ENCODE measurements at regions of chr10 and their contacts with region 1.

Region 1: DNA sequence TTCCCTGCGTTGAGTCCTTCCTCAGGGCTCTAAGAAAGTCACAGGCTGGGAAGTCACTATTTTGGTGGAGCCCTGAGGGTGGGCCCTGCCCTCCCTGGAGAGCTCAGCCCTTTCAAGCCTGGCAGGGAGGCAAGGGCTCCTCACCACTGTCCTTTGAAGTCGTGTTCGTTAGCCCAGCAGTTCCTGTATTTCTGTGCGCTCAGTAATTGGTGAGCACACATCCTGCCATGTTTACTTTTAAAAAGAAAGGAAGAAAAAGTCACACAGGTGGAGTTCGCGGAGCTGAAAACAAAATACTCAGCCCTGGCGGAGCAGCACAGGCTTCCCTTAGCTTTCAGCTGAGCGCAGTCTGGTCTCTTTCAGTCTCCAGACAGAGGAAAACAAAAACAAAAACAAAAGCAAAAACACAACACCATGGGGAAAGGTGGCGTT is 37.1 kb downstream of the PRKCQ start:
- DNase-seq: peak; percentile 67
- H3K4me3 Mint-ChIP-seq: peak overlapping the region; percentile 87
- H3K27ac Mint-ChIP-seq: peak overlapping the region; percentile 99
- H3K4me1 Mint-ChIP-seq: peaks cover 74% of the 10 kb centered on the region
- H3K27me3 Mint-ChIP-seq: no peaks in the 10 kb centered on the region

Region 2: DNA sequence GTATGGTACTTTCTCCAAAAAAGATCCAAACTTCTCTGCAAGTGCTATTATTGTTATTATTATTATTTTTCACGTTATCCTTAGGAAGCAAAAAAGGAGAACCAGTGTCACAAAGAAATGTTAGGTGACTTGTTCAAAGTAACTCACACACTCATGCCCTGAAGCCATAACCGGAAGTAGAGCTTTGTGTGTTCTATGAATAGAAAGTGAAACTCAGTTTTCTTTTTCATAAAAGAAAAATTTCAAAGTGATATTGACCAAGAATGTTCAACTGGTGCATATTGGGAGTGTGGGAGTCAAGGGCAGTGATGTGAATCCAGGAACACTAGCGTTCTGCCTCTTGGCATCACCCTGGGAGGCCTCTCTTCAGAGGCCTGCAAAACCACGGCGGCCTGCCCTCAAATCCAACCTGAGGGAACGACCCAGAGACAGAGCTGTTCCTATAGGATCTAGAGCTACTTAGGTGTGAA is 69.1 kb before region 1 on chr10:
- CTCF ChIA-PET with region 1: no interaction called
- intact Hi-C with region 1: loop called (anchors 1 kb)
- DNase-seq: peak; percentile 36
- H3K4me3 Mint-ChIP-seq: peak overlapping the region; percentile 71
- H3K27ac Mint-ChIP-seq: peak overlapping the region; percentile 89
- H3K4me1 Mint-ChIP-seq: peaks cover 53% of the 10 kb centered on the region
- H3K27me3 Mint-ChIP-seq: no peaks in the 10 kb centered on the region

Region 3: DNA sequence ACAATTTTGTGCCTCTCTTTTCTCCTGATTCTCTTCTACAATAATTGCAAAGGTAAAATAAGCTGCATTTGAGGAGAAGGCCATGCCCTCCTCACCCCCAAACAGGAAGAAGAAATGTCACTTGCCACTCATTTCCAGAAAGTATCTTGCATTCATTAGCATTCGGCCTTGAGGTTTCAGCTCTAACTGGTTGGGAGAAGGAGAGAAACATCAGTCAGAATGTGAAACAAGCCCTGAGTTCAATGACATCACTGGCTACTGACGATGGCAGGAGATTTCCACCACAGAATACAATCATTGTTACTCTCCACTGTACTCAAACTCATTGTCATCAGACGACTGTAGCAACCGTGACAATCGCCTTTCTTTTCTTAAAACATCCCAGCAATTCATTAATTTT is 35.7 kb before region 1 on chr10:
- CTCF ChIA-PET with region 1: no interaction called
- intact Hi-C with region 1: loop called (anchors 1 kb)
- DNase-seq: peak; percentile 80
- H3K4me3 Mint-ChIP-seq: peak overlapping the region; percentile 7
- H3K27ac Mint-ChIP-seq: peak overlapping the region; percentile 90
- H3K4me1 Mint-ChIP-seq: peaks cover 73% of the 10 kb centered on the region
- H3K27me3 Mint-ChIP-seq: no peaks in the 10 kb centered on the region

Region 4: DNA sequence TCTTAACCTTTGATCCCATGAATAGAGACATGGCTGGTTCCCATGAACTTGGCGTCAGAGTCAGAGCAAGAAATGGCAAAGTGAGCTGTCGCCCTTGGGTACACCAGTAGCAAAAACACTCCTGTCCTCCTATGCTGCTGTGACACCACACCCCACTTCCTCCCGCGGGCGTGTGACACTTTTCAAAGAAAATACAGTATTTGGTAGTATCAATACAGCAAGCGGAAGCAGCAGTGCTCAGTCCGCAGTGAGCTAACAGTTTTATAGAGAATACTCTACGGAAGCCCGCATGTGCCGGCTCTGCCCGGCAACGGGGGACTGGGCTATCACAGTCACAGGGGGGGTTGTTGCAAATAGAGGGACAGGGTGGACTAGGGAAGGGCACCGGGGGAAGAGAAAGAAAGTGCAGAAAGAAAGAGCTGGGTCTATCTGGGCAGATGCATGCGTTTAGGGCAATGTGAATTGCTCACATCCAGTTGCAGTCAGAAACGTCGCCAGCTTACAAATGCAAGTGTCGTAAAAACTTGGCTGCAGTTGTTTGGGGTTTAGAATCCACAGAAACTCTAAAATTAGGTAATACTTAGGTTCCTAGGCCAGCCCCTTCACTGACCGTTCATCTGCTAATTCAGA is 12.7 kb before region 1 on chr10:
- CTCF ChIA-PET with region 1: interaction called, 3 read pairs
- intact Hi-C with region 1: loop called (anchors 1 kb)
- DNase-seq: peak; percentile 92
- H3K4me3 Mint-ChIP-seq: peak overlapping the region; percentile 78
- H3K27ac Mint-ChIP-seq: peak overlapping the region; percentile 90
- H3K4me1 Mint-ChIP-seq: peaks cover 80% of the 10 kb centered on the region
- H3K27me3 Mint-ChIP-seq: no peaks in the 10 kb centered on the region

Region 5: DNA sequence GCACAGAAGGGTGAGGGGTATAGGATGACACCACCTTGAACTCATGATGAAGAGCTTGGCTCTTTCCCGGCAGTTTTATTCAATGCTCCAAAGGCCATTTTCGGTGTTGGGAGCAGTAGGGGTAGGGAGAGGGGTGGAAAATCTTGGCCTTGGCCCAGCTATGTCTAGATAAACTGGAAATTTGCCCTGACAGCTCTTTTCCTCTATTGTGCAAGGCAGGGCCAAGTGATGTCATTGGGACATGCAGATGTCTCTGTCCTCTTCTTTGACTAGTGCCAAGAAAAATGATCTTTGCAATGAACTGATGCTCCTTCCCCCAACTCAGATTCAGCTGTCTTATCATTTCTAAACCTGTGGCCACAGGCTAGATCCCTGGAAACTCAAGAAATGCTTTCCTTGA is 64.8 kb after region 1 on chr10:
- CTCF ChIA-PET with region 1: no interaction called
- intact Hi-C with region 1: loop called (anchors 2 kb)
- DNase-seq: no peak
- H3K4me3 Mint-ChIP-seq: peak overlapping the region; percentile 65
- H3K27ac Mint-ChIP-seq: peak overlapping the region; percentile 94
- H3K4me1 Mint-ChIP-seq: peaks cover 72% of the 10 kb centered on the region
- H3K27me3 Mint-ChIP-seq: no peaks in the 10 kb centered on the region

Measured in activated naive CD4-positive, alpha-beta T cell treated with anti-CD3 and anti-CD28 coated beads for 36 hours (primary cell).